Psoas muscle (tissue), 8 donors: ENCODE measurements at regions of chr6 and their contacts with region 1.

Region 1: GRCh38 chr6:108848116-108848868 is at the start of gene ARMC2:
- DNase-seq: peak; percentile 93 to 97
- ATAC-seq: peak; percentile 99 to 100 (median 99)
- H3K4me3 ChIP-seq: peak within 1 kb of the TSS; percentile 90
- H3K27ac ChIP-seq: peak within 1 kb of the TSS; percentile 71
- H3K4me1 ChIP-seq: peaks cover 29% of the 10 kb centered on the region
- H3K27me3 ChIP-seq: no peaks in the 10 kb centered on the region
- CTCF ChIP-seq: no peak
- total RNA-seq, gene ARMC2: 1.7 to 3.7 (median 2.6) TPM

Region 2: DNA sequence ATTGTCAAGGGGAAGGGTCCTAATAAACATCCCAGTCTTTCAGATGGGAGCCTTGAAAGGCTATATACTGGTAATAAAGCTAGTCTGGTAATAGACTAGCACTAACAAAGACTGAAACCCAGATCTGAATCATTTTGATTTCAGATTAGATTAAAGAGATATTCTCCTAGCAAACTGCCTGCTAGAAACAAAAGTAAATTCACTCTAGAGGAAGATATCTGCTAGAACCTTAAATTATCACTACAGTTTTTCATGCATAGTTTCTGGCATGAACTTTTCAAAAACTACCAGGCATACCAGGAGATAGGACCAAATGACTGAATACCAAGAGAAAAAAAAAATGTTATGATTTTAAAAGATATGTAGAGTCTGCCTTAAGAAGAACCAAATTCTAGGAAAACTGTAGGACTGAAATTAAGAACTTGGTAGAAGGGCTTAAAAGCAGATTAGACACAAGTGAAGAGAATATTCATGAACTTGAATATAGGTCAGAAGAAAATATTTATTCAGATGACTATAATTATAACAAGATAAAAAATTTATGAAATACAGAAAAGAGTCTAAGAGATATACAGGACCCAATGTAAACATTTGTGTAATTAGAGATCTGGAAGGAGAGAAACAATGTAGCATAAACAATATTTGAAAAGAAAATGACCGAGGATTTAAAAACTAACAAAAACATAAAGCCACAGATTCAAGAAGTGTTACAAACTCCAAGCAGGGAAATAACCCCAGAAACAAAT is 146.0 kb before region 1 on chr6:
- intact Hi-C with region 1: no loop called
- DNase-seq: no peak
- ATAC-seq: no peak
- H3K4me3 ChIP-seq: no peak overlapping the region
- H3K27ac ChIP-seq: no peak overlapping the region
- H3K4me1 ChIP-seq: no peaks in the 10 kb centered on the region
- H3K27me3 ChIP-seq: no peaks in the 10 kb centered on the region
- CTCF ChIP-seq: no peak

Region 3: GRCh38 chr6:108715832-108716231 is 132.5 kb before region 1 on chr6:
- intact Hi-C with region 1: no loop called
- DNase-seq: no peak
- ATAC-seq: no peak
- H3K4me3 ChIP-seq: no peak overlapping the region
- H3K27ac ChIP-seq: no peak overlapping the region
- H3K4me1 ChIP-seq: peaks cover 16% of the 10 kb centered on the region
- H3K27me3 ChIP-seq: no peaks in the 10 kb centered on the region
- CTCF ChIP-seq: no peak

Region 4: GRCh38 chr6:108888745-108889144 is 40.5 kb after region 1 on chr6:
- intact Hi-C with region 1: loop called (anchors 5 kb)
- DNase-seq: no peak
- ATAC-seq: no peak
- H3K4me3 ChIP-seq: no peak overlapping the region
- H3K27ac ChIP-seq: no peak overlapping the region
- H3K4me1 ChIP-seq: peaks cover 7% of the 10 kb centered on the region
- H3K27me3 ChIP-seq: no peaks in the 10 kb centered on the region
- CTCF ChIP-seq: no peak

Region 5: DNA sequence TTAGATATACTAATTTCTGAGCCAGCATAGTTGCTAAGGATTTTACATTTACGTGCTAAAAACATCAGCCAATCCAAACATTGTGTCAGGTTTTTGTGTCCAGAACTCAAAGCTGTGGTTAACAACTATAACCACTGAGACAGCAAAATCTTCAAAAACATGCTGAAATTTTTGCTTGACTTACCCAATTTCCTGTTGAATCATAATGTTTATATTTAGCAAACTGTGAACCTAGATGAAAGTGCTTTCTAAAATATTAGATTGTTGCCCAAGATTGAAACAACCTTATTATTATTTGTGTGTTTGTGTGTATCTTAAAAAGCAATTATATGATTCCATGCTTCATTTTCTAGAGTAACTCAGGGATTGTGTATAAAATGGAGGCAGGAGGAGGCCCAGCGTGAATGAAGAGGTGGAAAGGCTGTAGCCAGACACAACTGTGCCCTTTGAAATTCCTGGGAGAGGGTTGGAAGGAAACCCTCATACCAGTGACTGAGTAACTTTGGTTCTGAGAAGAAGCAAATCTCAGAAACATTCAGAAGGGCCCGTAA is 47.9 kb after region 1 on chr6:
- intact Hi-C with region 1: loop called in 1 of 2 experiments (anchors 5 kb)
- DNase-seq: no peak
- ATAC-seq: peak in 1 of 4 donors; percentile 39
- H3K4me3 ChIP-seq: no peak overlapping the region
- H3K27ac ChIP-seq: peak overlapping the region; percentile 78
- H3K4me1 ChIP-seq: peaks cover 37% of the 10 kb centered on the region
- H3K27me3 ChIP-seq: no peaks in the 10 kb centered on the region
- CTCF ChIP-seq: no peak

Region 6: DNA sequence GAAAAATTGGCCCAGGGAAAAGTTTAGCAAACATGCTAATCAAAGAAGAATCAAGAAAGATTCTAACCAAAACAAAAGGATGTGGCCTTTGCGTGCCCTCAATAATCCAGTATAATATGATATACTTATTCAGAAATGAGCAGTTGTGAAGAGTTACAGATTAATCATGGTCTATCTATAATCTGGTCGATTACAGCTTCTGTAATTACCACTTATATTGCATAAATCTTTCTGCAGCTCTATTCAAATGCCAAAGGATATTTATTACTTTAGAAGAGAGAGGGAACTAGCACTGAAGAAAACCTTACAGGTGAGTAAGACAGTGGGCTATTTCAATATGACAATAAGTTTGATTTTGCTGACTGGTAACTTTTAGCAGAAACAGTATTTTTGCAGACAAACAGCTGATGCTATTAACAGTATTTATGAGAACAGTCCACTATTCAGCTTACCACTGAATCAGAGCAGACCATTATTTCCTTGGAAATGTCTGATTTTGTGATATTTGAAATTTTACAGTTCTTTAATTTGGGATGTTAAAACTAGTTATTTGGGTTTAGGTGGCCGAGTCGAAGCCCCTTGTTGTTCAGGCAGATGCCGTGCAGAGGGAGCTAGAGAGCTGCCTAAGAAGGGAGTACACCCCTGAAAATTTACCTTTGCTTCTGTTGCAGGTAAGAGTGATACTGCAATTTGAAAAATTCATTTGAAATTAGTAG is 339.3 kb after region 1 on chr6:
- intact Hi-C with region 1: no loop called
- DNase-seq: peak in 1 of 2 donors; percentile 26
- ATAC-seq: peak; percentile 76 to 95 (median 89)
- H3K4me3 ChIP-seq: no peak overlapping the region
- H3K27ac ChIP-seq: no peak overlapping the region
- H3K4me1 ChIP-seq: no peaks in the 10 kb centered on the region
- H3K27me3 ChIP-seq: no peaks in the 10 kb centered on the region
- CTCF ChIP-seq: peak; percentile 94